Heart left ventricle (tissue), 16 donors: ENCODE measurements at regions of chr17 and their contacts with region 1.

Region 1: DNA sequence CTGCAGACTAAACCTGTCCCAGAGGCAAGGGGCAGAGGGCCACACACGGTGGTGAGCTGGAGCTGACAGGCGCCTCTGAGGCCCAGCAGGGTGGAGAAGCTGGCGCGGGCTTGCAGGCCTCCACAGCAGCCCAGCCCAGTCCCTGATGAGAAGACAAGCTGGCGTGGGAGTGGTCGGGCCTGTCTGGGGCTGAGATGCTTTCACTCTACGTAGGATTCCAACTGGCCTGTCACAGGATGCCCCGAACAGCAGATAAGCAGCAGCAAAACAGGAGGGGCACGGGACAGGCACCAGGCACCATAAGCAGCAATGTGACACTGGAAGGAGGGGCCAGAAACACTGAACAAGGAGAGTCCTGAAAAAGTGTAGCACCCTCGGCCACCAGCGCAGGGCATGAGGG is 40.1 kb downstream of the PEMT start:
- DNase-seq: peak; percentile 69 to 88 (median 82)
- ATAC-seq: peak; percentile 79 to 90 (median 84)
- H3K4me3 ChIP-seq: no peak overlapping the region
- H3K27ac ChIP-seq: peak overlapping the region; percentile 59 to 90 (median 81)
- H3K4me1 ChIP-seq: peaks cover 0 to 69% (median 31%) of the 10 kb centered on the region in 12 donors
- H3K27me3 ChIP-seq: no peaks in the 10 kb centered on the region
- CTCF ChIP-seq: no peak
- POLR2A ChIP-seq: peak in 1 of 2 donors; percentile 29

Region 2: GRCh38 chr17:17535957-17536356 is 15.4 kb before region 1 on chr17:
- intact Hi-C with region 1: loop called in 1 of 10 experiments (anchors 2 kb)
- DNase-seq: peak; percentile 86 to 96 (median 91)
- ATAC-seq: peak; percentile 95 to 97 (median 96)
- H3K4me3 ChIP-seq: no peak overlapping the region
- H3K27ac ChIP-seq: peak overlapping the region; percentile 44 to 92 (median 81)
- H3K4me1 ChIP-seq: peaks cover 0 to 49% (median 14%) of the 10 kb centered on the region in 12 donors
- H3K27me3 ChIP-seq: no peaks in the 10 kb centered on the region
- CTCF ChIP-seq: no peak
- POLR2A ChIP-seq: peak in 1 of 2 donors; percentile 26

Region 3: GRCh38 chr17:17626151-17626805 is 74.9 kb after region 1 on chr17:
- intact Hi-C with region 1: no loop called
- DNase-seq: peak in 1 of 5 donors; percentile 13
- ATAC-seq: no peak
- H3K4me3 ChIP-seq: no peak overlapping the region
- H3K27ac ChIP-seq: no peak overlapping the region
- H3K4me1 ChIP-seq: no peaks in the 10 kb centered on the region
- H3K27me3 ChIP-seq: no peaks in the 10 kb centered on the region
- CTCF ChIP-seq: no peak
- POLR2A ChIP-seq: no peak